ENCODE measurements at regions of chr12 and their contacts with region 1.

Region 1: GRCh38 chr12:101490286-101490920 is 15.3 kb downstream of the SPIC start:
- DNase-seq: no peak
- ATAC-seq: peak; percentile 77

Region 2: DNA sequence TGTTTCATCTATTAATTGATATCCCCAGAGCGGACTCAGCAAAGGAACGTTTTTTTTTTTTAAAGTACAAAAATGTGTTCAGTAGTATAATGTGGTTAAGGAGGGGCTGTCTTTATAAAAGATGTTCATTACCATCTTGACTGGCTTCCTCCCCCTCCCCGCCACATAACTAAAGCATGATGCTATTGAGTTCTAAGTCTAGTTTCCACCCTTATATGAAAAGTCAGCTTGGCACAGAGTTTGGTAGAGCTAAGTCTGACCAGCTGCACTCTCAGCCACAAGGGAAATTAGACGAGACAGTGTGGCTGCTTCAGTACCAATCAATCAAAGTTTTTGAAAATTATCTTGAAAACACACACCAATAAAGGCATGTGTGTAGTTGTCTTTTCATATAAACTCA is 102.5 kb after region 1 on chr12:
- intact Hi-C with region 1: no loop called
- DNase-seq: no peak
- ATAC-seq: no peak

Region 3: DNA sequence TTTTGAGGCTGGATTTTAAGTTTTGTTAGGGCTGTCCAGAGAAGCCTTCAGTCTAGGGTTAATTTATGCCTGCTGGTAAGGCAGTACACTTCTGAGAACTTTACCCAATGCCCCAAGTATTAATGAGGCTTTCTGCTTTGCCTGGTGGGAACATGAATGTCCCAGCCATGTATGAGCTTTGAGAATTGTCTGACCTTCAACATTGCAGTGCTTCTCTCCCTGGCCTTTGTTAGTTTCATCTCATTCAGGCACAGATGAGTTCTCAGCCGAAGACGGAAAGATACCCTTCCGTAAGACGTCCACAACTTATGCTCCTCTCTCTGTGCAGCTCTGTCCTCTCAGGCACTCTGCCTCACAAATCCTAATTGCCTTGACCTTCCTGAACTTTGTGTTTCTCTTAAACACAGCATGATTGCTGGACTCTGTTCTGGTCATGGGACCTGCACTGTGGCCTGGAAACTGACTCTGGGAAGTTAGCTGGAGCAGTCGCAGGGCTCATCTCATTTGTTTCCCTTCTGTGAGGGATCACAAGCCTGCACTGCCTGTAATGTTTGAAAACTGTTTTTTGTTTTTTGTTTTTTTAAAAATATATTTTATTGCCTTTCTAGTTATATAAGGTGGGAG is 222.8 kb after region 1 on chr12:
- intact Hi-C with region 1: loop called (anchors 5 kb)
- DNase-seq: no peak
- ATAC-seq: peak; percentile 82

Region 4: GRCh38 chr12:101759396-101760047 is 269.1 kb after region 1 on chr12:
- intact Hi-C with region 1: loop called (anchors 10 kb)
- DNase-seq: no peak
- ATAC-seq: no peak